H1 (cell line): ENCODE measurements at regions of chr10 and their contacts with region 1.

Region 1: GRCh38 chr10:14378387-14378960 is 47.8 kb upstream of the FRMD4A start:
- DNase-seq: no peak
- H3K4me3 ChIP-seq: no peak overlapping the region
- H3K27ac ChIP-seq: no peak overlapping the region
- H3K4me1 ChIP-seq: peaks cover 0 to 6% (median 3%) of the 10 kb centered on the region in 4 experiments; a peak in 3 of 7 replicates
- H3K27me3 ChIP-seq: no peaks in the 10 kb centered on the region
- CTCF ChIP-seq: no peak
- EP300 ChIP-seq: no peak
- POLR2A ChIP-seq: no peak
- RAD21 ChIP-seq: no peak

Region 2: DNA sequence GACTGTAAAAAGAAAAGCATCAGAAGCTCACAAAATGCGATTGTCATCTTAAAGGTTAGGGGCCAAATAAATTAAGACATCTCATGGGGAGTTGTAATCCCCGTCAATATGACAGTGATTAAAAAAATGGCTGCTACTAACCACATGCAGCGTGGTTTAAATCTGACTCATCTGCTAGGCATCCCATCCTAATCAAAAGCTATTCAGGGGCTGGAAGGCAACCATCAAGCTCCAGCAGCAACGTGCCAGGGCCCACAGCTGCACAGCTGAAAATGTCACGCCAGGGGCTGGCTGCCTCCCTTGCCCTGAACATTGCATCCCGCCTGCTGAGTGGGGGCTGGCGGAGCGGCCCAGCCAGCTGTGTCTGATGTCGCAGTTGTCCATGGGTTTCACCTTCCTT is 18.6 kb after region 1 on chr10:
- CTCF ChIA-PET with region 1: interaction called, 14 read pairs
- POLR2A ChIA-PET with region 1: no interaction called
- DNase-seq: peak in 1 of 2 experiments; percentile 17
- H3K4me3 ChIP-seq: no peak overlapping the region
- H3K27ac ChIP-seq: no peak overlapping the region
- H3K4me1 ChIP-seq: peaks cover 0 to 6% (median under 1%) of the 10 kb centered on the region in 4 experiments; a peak in 4 of 7 replicates
- H3K27me3 ChIP-seq: no peaks in the 10 kb centered on the region
- CTCF ChIP-seq: no peak
- EP300 ChIP-seq: no peak
- POLR2A ChIP-seq: no peak
- RAD21 ChIP-seq: no peak